PC-3 (cell line): ENCODE measurements at regions of chr15 and their contacts with region 1.

Region 1: DNA sequence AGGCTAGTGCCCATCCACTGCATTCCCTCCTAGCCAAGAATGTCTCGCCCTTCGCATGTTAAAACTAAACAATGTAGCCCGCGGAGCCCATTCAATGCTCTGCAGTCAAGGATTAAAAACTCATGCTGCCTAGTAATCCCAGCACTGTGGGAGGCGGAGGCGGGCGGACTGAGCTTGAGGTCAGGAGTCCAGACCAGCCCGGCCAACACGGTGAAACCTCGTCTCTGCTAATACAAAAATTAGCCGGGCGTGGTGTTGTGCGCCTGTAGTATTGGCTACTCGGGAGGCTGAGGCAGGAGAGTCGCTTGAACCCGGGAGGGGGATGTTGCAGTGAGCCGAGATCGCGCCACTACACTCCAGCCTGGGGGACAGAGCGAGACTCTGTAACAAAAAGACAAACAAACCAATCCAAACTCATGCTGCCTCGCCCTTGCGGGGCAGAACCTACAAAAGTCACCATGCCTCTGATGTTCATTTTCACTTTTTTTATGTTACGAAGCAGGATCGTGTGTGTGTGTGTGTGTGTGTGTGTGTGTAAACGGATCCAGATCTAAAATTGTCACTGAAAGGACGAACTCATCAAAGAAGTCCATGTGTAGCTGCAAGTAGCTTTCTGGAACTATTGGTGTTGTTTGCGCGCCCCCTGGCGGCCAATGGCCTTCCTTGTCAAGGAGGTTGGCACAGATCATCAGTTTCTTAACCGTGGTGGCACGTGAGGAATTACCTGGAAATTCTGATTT is 54.8 kb upstream of the SPESP1 start:
- DNase-seq: peak; percentile 92
- ATAC-seq: peak; percentile 78
- H3K4me3 ChIP-seq: peak overlapping the region; percentile 68
- H3K27ac ChIP-seq: no peak overlapping the region
- H3K4me1 ChIP-seq: 0 out of 2 replicates have a peak, but pooled peaks cover 6% of the 10 kb centered on the region
- H3K27me3 ChIP-seq: peaks cover 18% of the 10 kb centered on the region
- CTCF ChIP-seq: peak; percentile 84

Region 2: GRCh38 chr15:68672781-68673205 is 202.8 kb before region 1 on chr15:
- CTCF ChIA-PET with region 1: interaction called, 13 read pairs
- POLR2A ChIA-PET with region 1: no interaction called
- intact Hi-C with region 1: no loop called
- DNase-seq: peak; percentile 7
- ATAC-seq: no peak
- H3K4me3 ChIP-seq: no peak overlapping the region
- H3K27ac ChIP-seq: no peak overlapping the region
- H3K4me1 ChIP-seq: no peaks in the 10 kb centered on the region
- H3K27me3 ChIP-seq: no peaks in the 10 kb centered on the region
- CTCF ChIP-seq: peak; percentile 31; the same call in 1 of the 2 replicates

Region 3: GRCh38 chr15:68730471-68730919 is 145.1 kb before region 1 on chr15:
- CTCF ChIA-PET with region 1: no interaction called
- POLR2A ChIA-PET with region 1: no interaction called
- intact Hi-C with region 1: loop called (anchors 1 kb)
- DNase-seq: peak; percentile 59
- ATAC-seq: 0 out of 2 replicates have a peak, but pooled peaks have one; percentile 29
- H3K4me3 ChIP-seq: no peak overlapping the region
- H3K27ac ChIP-seq: no peak overlapping the region
- H3K4me1 ChIP-seq: no peaks in the 10 kb centered on the region
- H3K27me3 ChIP-seq: no peaks in the 10 kb centered on the region
- CTCF ChIP-seq: peak; percentile 66

Region 4: DNA sequence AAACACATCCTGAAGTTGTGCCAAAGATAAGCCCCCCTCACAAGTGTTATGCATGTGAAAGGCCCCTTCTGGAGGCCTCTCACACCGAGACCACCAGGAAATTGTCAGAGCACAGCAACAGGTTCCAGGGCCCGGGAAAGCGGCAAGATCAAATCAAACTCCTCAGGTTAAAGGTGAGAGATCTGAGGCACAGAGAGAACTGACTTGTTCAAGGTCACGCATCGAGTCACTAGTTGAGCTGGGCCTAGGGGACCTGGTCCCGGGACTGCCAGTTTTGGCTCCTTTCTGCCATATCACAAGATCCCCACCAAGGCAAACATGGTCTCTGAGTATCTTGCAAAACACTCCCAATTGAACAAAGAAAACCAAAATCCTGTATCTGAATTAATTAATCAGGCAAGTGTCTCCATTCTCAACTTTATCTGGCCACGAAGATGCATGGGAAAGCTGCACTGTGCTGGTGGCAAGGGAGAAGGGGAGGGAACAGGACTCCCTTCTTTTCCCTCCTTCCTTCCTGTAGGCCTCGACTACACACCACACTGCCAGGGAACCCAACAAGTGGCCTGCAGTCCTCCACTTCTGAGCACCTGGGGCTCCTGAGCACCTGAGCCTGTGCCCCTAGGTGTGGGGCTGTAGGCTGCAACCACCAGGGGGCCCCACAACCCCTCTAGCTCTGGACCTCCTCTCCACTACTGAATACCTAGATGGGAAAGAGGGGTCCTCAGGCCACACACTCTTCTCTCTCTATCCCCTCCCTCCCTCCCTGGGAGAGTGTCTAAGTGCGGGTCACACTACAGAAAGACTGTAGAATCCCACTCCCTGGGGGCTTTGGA is 92.1 kb before region 1 on chr15:
- CTCF ChIA-PET with region 1: no interaction called
- POLR2A ChIA-PET with region 1: no interaction called
- intact Hi-C with region 1: loop called (anchors 1 kb)
- DNase-seq: peak; percentile 49
- ATAC-seq: peak; percentile 55
- H3K4me3 ChIP-seq: no peak overlapping the region
- H3K27ac ChIP-seq: no peak overlapping the region
- H3K4me1 ChIP-seq: no peaks in the 10 kb centered on the region
- H3K27me3 ChIP-seq: no peaks in the 10 kb centered on the region
- CTCF ChIP-seq: peak; percentile 64

Region 5: GRCh38 chr15:68829068-68829467 is 46.5 kb before region 1 on chr15:
- CTCF ChIA-PET with region 1: no interaction called
- POLR2A ChIA-PET with region 1: no interaction called
- intact Hi-C with region 1: loop called (anchors 5 kb)
- DNase-seq: peak; percentile 25
- ATAC-seq: peak; percentile 38; the same call in 1 of the 2 replicates
- H3K4me3 ChIP-seq: no peak overlapping the region
- H3K27ac ChIP-seq: no peak overlapping the region
- H3K4me1 ChIP-seq: no peaks in the 10 kb centered on the region
- H3K27me3 ChIP-seq: peaks cover 8% of the 10 kb centered on the region; the same call in 1 of the 2 replicates
- CTCF ChIP-seq: peak; percentile 57